Uterus (tissue), 4 donors: ENCODE measurements at regions of chr4 and their contacts with region 1.

Region 1: GRCh38 chr4:5003372-5003857 is 15.8 kb downstream of the CYTL1 start:
- DNase-seq: no peak
- H3K4me3 ChIP-seq: no peak overlapping the region
- H3K27ac ChIP-seq: no peak overlapping the region
- H3K4me1 ChIP-seq: no peaks in the 10 kb centered on the region
- H3K27me3 ChIP-seq: no peaks in the 10 kb centered on the region
- CTCF ChIP-seq: no peak
- POLR2A ChIP-seq: no peak

Region 2: DNA sequence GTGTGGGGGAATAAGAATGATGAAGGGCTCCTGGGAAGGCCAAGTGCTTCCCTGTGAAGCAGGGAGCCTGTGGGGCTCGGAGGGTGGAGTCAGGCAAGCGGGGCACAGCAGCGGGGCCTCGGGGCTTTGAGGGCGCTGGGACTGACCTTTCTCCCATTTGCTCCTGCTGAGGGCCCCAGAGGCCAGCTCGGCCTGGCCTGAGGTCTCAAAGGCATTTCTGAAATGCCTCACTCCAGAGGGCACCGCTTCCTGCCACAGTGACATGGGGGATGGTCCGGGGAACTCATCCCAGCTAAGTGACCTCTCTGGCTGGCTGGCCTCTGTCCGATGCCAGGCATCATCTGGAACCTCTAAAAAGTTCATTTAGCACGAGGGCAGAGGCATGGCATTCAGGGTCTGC is 362.7 kb before region 1 on chr4:
- intact Hi-C with region 1: no loop called
- DNase-seq: no peak
- H3K4me3 ChIP-seq: no peak overlapping the region
- H3K27ac ChIP-seq: no peak overlapping the region
- H3K4me1 ChIP-seq: no peaks in the 10 kb centered on the region
- H3K27me3 ChIP-seq: no peaks in the 10 kb centered on the region
- CTCF ChIP-seq: no peak
- POLR2A ChIP-seq: no peak

Region 3: DNA sequence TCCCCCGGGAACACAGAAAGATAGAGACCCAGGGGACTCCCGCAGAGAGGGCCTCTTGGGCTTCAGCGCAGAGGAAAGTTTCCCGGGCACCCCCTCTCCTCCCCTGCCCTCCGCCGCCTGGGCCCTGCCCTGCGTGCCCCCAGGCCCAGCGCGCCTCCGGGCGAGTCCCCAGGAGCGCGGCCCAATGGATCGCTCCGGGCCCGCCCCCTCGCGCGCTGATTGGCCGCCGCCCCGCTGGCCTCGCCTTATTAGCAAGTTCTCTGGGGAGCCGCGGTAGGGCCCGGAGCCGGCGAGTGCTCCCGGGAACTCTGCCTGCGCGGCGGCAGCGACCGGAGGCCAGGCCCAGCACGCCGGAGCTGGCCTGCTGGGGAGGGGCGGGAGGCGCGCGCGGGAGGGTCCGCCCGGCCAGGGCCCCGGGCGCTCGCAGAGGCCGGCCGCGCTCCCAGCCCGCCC is 144.0 kb before region 1 on chr4 and contains the start of gene MSX1:
- intact Hi-C with region 1: loop called (anchors 5 kb)
- DNase-seq: peak; percentile 87 to 92
- H3K4me3 ChIP-seq: peak within 1 kb of the TSS; percentile 59 to 83
- H3K27ac ChIP-seq: peak within 1 kb of the TSS; percentile 76 to 83
- H3K4me1 ChIP-seq: peaks cover 0 to 3% of the 10 kb centered on the region in 2 donors
- H3K27me3 ChIP-seq: peaks cover 7 to 34% of the 10 kb centered on the region in 2 donors
- CTCF ChIP-seq: peak in 1 of 4 experiments; percentile 10
- POLR2A ChIP-seq: peak; percentile 94 to 98
- total RNA-seq, gene MSX1: 19.7 to 33.0 (median 23.8) TPM

Region 4: DNA sequence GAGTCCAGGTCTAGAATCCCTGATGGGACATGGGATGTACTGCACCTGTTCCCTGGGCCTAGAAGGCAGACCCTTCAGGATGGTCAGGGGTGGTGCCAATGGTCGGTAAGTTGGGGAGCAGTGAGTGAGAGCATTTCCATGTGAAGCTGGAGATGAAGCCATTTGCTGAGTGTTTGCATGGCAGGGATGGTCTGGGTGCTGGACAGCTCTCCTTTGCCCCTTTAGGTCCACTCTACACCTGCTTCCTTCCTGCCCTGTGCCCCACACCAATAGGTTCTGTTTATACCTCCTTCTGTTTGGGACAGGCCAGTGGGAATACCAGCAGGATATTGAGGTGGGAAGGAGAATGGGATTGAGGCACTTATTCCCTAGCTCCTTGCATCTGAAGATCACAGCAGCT is 229.1 kb after region 1 on chr4:
- intact Hi-C with region 1: no loop called
- DNase-seq: no peak
- H3K4me3 ChIP-seq: no peak overlapping the region
- H3K27ac ChIP-seq: no peak overlapping the region
- H3K4me1 ChIP-seq: no peaks in the 10 kb centered on the region
- H3K27me3 ChIP-seq: no peaks in the 10 kb centered on the region
- CTCF ChIP-seq: no peak
- POLR2A ChIP-seq: no peak